OCI-LY7 (cell line): ENCODE measurements at regions of chr12 and their contacts with region 1.

Region 1: GRCh38 chr12:68807576-68808387 is at the start of gene MDM2:
- DNase-seq: peak; percentile 98
- H3K4me3 ChIP-seq: peak within 1 kb of the TSS; percentile 99
- H3K27ac ChIP-seq: peak within 1 kb of the TSS; percentile 100
- H3K4me1 ChIP-seq: peaks cover 70% of the 10 kb centered on the region
- CTCF ChIP-seq: peak; percentile 78
- total RNA-seq, gene MDM2: 143 and 229 TPM in 2 replicates

Region 2: GRCh38 chr12:67720351-67720856 is 1087.4 kb before region 1 on chr12:
- CTCF ChIA-PET with region 1: no interaction called
- POLR2A ChIA-PET with region 1: no interaction called
- intact Hi-C with region 1: no loop called
- DNase-seq: no peak
- H3K4me3 ChIP-seq: no peak overlapping the region
- H3K27ac ChIP-seq: no peak overlapping the region
- H3K4me1 ChIP-seq: no peaks in the 10 kb centered on the region
- CTCF ChIP-seq: no peak

Region 3: GRCh38 chr12:68610370-68611093 is 197.2 kb before region 1 on chr12 and contains the start of gene RAP1B:
- CTCF ChIA-PET with region 1: no interaction called
- POLR2A ChIA-PET with region 1: no interaction called
- intact Hi-C with region 1: loop called (anchors 2 kb)
- DNase-seq: peak; percentile 95
- H3K4me3 ChIP-seq: peak within 1 kb of the TSS; percentile 95
- H3K27ac ChIP-seq: peak within 1 kb of the TSS; percentile 88
- H3K4me1 ChIP-seq: peaks cover 35% of the 10 kb centered on the region
- CTCF ChIP-seq: no peak
- total RNA-seq, gene RAP1B: 100 and 101 TPM in 2 replicates

Region 4: GRCh38 chr12:68695454-68695853 is 112.3 kb before region 1 on chr12:
- CTCF ChIA-PET with region 1: no interaction called
- POLR2A ChIA-PET with region 1: no interaction called
- intact Hi-C with region 1: no loop called
- DNase-seq: no peak
- H3K4me3 ChIP-seq: no peak overlapping the region
- H3K27ac ChIP-seq: no peak overlapping the region
- H3K4me1 ChIP-seq: no peaks in the 10 kb centered on the region
- CTCF ChIP-seq: no peak

Region 5: DNA sequence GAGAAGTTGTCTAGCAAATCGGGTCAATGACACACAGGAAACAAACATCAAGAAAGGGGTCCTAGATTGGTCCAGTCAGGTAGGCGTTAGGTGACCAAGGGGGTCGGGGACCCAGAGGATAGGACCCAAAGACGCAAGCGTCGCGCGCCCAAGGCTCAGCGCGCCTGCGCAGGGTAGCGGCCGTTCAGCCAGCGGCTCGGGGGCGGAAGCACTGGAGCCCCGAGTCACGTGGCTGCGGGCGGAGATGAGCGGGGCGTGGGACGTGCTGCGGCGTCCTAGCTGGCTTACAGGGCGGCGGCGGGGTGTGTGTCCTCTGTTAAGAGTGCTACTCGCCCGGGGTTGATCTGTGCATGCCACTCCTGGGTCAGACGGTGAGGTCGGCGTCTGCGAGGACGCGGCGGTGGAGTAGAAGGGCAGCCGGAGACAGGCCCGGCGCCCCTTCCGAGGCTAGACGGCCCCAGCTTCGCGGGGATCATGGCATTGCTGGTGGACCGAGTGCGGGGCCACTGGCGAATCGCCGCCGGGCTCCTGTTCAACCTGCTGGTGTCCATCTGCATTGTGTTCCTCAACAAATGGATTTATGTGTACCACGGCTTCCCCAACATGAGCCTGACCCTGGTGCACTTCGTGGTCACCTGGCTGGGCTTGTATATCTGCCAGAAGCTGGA is 61.7 kb before region 1 on chr12 and contains the start of gene SLC35E3:
- CTCF ChIA-PET with region 1: no interaction called
- POLR2A ChIA-PET with region 1: interaction called, 20 read pairs
- intact Hi-C with region 1: loop called (anchors 1 kb)
- DNase-seq: peak; percentile 96
- H3K4me3 ChIP-seq: peak within 1 kb of the TSS; percentile 92
- H3K27ac ChIP-seq: peak within 1 kb of the TSS; percentile 59
- H3K4me1 ChIP-seq: peaks cover 46% of the 10 kb centered on the region
- CTCF ChIP-seq: no peak
- total RNA-seq, gene SLC35E3: 24.6 and 26.6 TPM in 2 replicates

Region 6: DNA sequence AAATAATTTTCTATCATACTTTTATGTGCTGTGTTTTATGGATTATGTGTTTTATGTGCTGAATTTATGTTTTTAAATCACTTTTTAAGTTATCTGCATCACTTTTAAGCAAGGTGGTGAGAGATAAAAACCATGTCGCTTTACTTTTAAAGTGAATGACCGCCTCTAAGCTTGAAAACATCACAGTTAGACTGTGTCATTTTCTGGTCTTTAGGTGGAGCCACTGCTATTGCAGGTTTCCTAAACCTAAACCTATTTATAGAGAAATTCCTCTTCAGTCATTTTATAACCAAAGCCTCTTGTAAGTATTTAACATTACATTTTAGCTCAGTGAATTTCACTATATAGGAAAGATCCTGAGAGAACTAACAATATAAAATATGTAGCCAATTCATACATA is 20.9 kb before region 1 on chr12:
- CTCF ChIA-PET with region 1: no interaction called
- POLR2A ChIA-PET with region 1: interaction called, 23 read pairs
- intact Hi-C with region 1: no loop called
- DNase-seq: no peak
- H3K4me3 ChIP-seq: peak overlapping the region; percentile 7
- H3K27ac ChIP-seq: peak overlapping the region; percentile 77
- H3K4me1 ChIP-seq: peaks cover 78% of the 10 kb centered on the region
- CTCF ChIP-seq: peak; percentile 65

Region 7: DNA sequence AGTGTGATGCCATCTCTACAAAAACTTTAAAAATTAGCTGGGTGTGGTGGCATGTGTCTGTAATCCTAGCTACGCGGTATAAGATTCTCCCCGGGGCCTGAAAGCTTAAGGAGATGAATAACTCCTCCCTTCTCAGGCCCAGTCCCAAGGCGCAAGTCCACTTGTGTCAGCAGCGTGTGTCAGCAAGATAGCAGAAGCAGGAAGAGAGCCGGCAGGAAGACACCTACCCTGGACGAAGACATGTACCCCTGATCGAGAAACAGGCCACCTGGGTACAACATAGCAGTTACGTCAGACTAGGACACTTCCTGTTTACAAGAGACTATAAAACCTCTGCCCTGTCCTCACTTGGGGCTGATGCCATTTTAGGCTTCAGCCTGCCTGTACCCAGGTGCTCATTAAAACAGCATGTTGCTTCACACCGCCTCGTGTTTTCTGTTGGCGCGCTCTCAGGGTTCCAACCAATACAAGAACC is 81.9 kb after region 1 on chr12:
- CTCF ChIA-PET with region 1: no interaction called
- POLR2A ChIA-PET with region 1: no interaction called
- intact Hi-C with region 1: loop called (anchors 2 kb)
- DNase-seq: peak; percentile 96
- H3K4me3 ChIP-seq: peak overlapping the region; percentile 32
- H3K27ac ChIP-seq: peak overlapping the region; percentile 89
- H3K4me1 ChIP-seq: peaks cover 84% of the 10 kb centered on the region
- CTCF ChIP-seq: no peak